Activated naive CD4-positive, alpha-beta T cell treated with anti-CD3 and anti-CD28 coated beads for 36 hours (primary cell): ENCODE measurements at regions of chr17 and their contacts with region 1.

Region 1: GRCh38 chr17:28335201-28335955 is at the starts of genes IFT20 and TNFAIP1:
- DNase-seq: peak; percentile 99
- H3K4me3 Mint-ChIP-seq: peak within 1 kb of the TSS; percentile 95
- H3K27ac Mint-ChIP-seq: peak within 1 kb of the TSS; percentile 90
- H3K4me1 Mint-ChIP-seq: peaks cover 34% of the 10 kb centered on the region
- H3K27me3 Mint-ChIP-seq: no peaks in the 10 kb centered on the region
- total RNA-seq, gene IFT20: 17.9 to 18.1 TPM
- total RNA-seq, gene TNFAIP1: 18.6 to 18.7 TPM

Region 2: GRCh38 chr17:28151001-28151400 is 184.4 kb before region 1 on chr17:
- CTCF ChIA-PET with region 1: no interaction called
- intact Hi-C with region 1: no loop called
- DNase-seq: no peak
- H3K4me3 Mint-ChIP-seq: no peak overlapping the region
- H3K27ac Mint-ChIP-seq: no peak overlapping the region
- H3K4me1 Mint-ChIP-seq: no peaks in the 10 kb centered on the region
- H3K27me3 Mint-ChIP-seq: no peaks in the 10 kb centered on the region

Region 3: GRCh38 chr17:28258347-28259206 is 76.8 kb before region 1 on chr17:
- CTCF ChIA-PET with region 1: no interaction called
- intact Hi-C with region 1: no loop called
- DNase-seq: no peak
- H3K4me3 Mint-ChIP-seq: no peak overlapping the region
- H3K27ac Mint-ChIP-seq: no peak overlapping the region
- H3K4me1 Mint-ChIP-seq: no peaks in the 10 kb centered on the region
- H3K27me3 Mint-ChIP-seq: no peaks in the 10 kb centered on the region

Region 4: GRCh38 chr17:28357061-28357900 is 21.9 kb after region 1 on chr17 and contains the start of gene POLDIP2:
- CTCF ChIA-PET with region 1: interaction called, 6 read pairs
- intact Hi-C with region 1: loop called (anchors 1 kb)
- DNase-seq: peak; percentile 97
- H3K4me3 Mint-ChIP-seq: peak within 1 kb of the TSS; percentile 94
- H3K27ac Mint-ChIP-seq: peak within 1 kb of the TSS; percentile 74
- H3K4me1 Mint-ChIP-seq: peaks cover 33% of the 10 kb centered on the region
- H3K27me3 Mint-ChIP-seq: no peaks in the 10 kb centered on the region
- total RNA-seq, gene POLDIP2: 74.6 to 76.5 TPM

Region 5: GRCh38 chr17:28405632-28406472 is 70.5 kb after region 1 on chr17 and contains the start of gene SLC46A1:
- CTCF ChIA-PET with region 1: no interaction called
- intact Hi-C with region 1: loop called (anchors 1 kb)
- DNase-seq: peak; percentile 51
- H3K4me3 Mint-ChIP-seq: peak within 1 kb of the TSS; percentile 74
- H3K27ac Mint-ChIP-seq: no peak within 1 kb of the TSS
- H3K4me1 Mint-ChIP-seq: peaks cover 6% of the 10 kb centered on the region
- H3K27me3 Mint-ChIP-seq: peaks cover 2% of the 10 kb centered on the region
- total RNA-seq, gene SLC46A1: 1.8 to 2.4 TPM

Region 6: GRCh38 chr17:28598799-28599310 is 263.5 kb after region 1 on chr17 and contains the start of gene SPAG5:
- CTCF ChIA-PET with region 1: no interaction called
- intact Hi-C with region 1: loop called (anchors 1 kb)
- DNase-seq: peak; percentile 96
- H3K4me3 Mint-ChIP-seq: peak within 1 kb of the TSS; percentile 95
- H3K27ac Mint-ChIP-seq: peak within 1 kb of the TSS; percentile 94
- H3K4me1 Mint-ChIP-seq: peaks cover 15% of the 10 kb centered on the region
- H3K27me3 Mint-ChIP-seq: no peaks in the 10 kb centered on the region
- total RNA-seq, gene SPAG5: 210 to 216 TPM